ENCODE measurements at regions of chr1 and their contacts with region 1.

Region 1: GRCh38 chr1:234212764-234213657 is 160.2 kb upstream of the COA6 start:
- DNase-seq: peak; percentile 32
- H3K4me3 Mint-ChIP-seq: no peak overlapping the region
- H3K27ac Mint-ChIP-seq: no peak overlapping the region
- H3K4me1 Mint-ChIP-seq: peaks cover 16% of the 10 kb centered on the region
- H3K27me3 Mint-ChIP-seq: peaks cover 33% of the 10 kb centered on the region

Region 2: DNA sequence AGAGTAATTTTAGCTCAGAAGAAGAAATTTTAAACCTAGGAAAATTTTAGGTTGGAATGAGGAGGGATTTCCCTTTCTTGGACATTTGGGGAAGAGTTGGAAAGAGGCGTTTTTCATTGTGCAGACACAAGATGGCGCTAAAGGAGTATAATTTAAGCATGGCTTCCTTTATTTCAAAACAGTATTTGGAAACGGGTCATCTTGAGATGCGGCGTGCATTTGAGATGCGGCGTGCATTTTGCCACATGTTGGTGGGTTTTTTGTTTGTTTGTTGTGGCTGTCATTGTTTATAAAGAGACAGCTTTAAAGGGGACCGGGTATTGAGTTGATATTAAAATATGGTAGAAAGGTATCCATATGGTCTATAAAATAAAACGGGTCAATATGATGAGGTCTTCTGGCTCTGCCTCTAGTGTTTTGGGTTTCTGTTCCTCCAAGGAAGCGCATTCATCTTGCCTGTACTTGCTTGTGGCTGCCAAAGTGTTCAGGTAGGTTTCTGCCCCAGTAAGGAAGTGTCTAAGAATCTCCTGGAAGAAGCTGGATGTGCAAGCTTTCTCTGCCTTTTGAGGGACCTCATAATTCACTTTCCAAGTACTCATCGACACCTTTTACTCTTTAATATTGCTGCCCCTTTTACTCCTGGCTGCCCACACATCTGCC is 98.2 kb before region 1 on chr1:
- CTCF ChIA-PET with region 1: interaction called, 13 read pairs
- POLR2A ChIA-PET with region 1: no interaction called
- intact Hi-C with region 1: no loop called
- DNase-seq: peak; percentile 38
- H3K4me3 Mint-ChIP-seq: peak overlapping the region; percentile 25
- H3K27ac Mint-ChIP-seq: no peak overlapping the region
- H3K4me1 Mint-ChIP-seq: peaks cover 7% of the 10 kb centered on the region
- H3K27me3 Mint-ChIP-seq: peaks cover 15% of the 10 kb centered on the region

Region 3: DNA sequence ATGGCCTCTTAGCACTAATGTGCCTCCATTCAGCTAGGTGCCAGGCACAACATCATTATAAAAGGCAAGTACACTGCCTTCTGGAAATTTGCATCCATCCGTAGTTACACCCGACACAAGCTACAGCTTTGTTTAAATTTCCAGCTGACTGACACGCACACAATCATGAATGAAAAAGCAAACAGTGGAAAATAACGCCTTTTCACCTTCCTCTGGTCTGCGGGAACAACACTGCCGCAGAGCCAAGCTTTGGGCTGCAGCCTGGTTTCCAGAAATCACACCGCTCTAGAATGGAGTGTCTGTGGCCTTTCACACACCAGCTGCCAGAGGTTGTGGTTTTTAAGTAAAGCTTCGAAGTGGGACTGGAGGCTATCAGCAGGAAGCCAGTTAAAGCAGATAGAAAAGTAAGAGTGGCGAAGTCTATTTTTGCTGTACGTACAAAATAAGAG is 17.4 kb after region 1 on chr1:
- CTCF ChIA-PET with region 1: interaction called, 13 read pairs
- POLR2A ChIA-PET with region 1: no interaction called
- intact Hi-C with region 1: no loop called
- DNase-seq: no peak
- H3K4me3 Mint-ChIP-seq: no peak overlapping the region
- H3K27ac Mint-ChIP-seq: no peak overlapping the region
- H3K4me1 Mint-ChIP-seq: peaks cover 8% of the 10 kb centered on the region
- H3K27me3 Mint-ChIP-seq: peaks cover 25% of the 10 kb centered on the region